ENCODE measurements at regions of chr6 and their contacts with region 1.

Region 1: DNA sequence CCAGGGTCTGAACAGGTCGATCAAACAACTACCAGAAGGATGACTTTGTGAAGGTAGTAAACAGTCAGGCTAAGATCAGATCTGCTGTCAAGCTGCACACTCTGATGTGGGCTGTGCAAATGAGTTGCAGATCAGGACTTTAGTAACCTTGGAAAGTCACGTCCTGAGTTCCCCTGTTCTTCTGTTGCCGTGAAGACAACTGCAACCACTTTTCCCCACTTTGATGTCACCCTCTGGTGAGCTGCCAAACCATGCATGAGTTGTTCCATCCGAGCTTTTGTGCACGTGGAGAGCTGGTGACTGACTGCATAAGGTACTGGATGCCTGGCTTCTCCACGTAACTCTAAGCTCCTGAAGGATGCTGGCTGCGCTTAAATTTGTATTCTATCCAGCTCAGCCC is 111.0 kb downstream of the CD83 start:
- ATAC-seq: no peak
- H3K4me3 ChIP-seq: no peak overlapping the region
- H3K27ac ChIP-seq: no peak overlapping the region
- H3K4me1 ChIP-seq: peaks cover 0 to 4% of the 10 kb centered on the region in 2 donors

Region 2: GRCh38 chr6:13903364-13903763 is 325.2 kb before region 1 on chr6:
- in situ Hi-C with region 1: no loop called
- ATAC-seq: no peak
- H3K4me3 ChIP-seq: no peak overlapping the region
- H3K27ac ChIP-seq: no peak overlapping the region
- H3K4me1 ChIP-seq: no peaks in the 10 kb centered on the region

Region 3: GRCh38 chr6:14452567-14453527 is 224.3 kb after region 1 on chr6:
- in situ Hi-C with region 1: loop called in 1 of 9 experiments (anchors 25 kb)
- ATAC-seq: no peak
- H3K4me3 ChIP-seq: no peak overlapping the region
- H3K27ac ChIP-seq: no peak overlapping the region
- H3K4me1 ChIP-seq: peaks cover 16 to 17% of the 10 kb centered on the region in 2 donors

Measured in motor neuron (in vitro differentiated cells).